GM12878 (cell line): ENCODE measurements at regions of chr3 and their contacts with region 1.

Region 1: DNA sequence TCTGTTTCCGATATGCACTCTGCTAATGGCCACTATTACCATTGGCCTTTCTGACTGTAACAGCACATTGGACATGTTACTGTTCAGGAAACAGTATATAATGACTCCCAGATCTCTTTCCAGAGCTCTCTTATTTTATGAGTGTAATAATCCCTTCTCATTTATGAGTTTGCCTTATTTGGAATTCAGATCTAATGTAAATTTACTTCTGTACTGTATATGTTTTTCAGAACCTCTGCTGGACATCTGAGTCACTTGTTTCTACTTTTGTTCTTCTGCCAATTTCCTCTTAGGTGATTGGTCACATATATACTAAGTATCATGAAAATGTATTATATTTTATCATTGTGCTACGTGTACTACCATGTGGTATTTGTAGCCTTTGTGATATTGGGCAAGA is 30.5 kb downstream of the RSRC1 start:
- DNase-seq: no peak
- ATAC-seq: no peak
- H3K4me3 ChIP-seq: no peak overlapping the region
- H3K27ac ChIP-seq: no peak overlapping the region
- H3K4me1 ChIP-seq: no peaks in the 10 kb centered on the region
- H3K27me3 ChIP-seq: no peaks in the 10 kb centered on the region
- CTCF ChIP-seq: no peak
- EP300 ChIP-seq: no peak
- POLR2A ChIP-seq: no peak
- RAD21 ChIP-seq: no peak

Region 2: GRCh38 chr3:158110658-158111018 is 29.8 kb before region 1 on chr3:
- CTCF ChIA-PET with region 1: no interaction called
- POLR2A ChIA-PET with region 1: no interaction called
- RAD21 ChIA-PET with region 1: no interaction called
- SMC1A ChIA-PET with region 1: no interaction called
- in situ Hi-C with region 1: no loop called
- intact Hi-C with region 1: no loop called
- DNase-seq: no peak
- ATAC-seq: no peak
- H3K4me3 ChIP-seq: peak overlapping the region; percentile 79
- H3K27ac ChIP-seq: peak overlapping the region; percentile 80
- H3K4me1 ChIP-seq: 0 out of 2 replicates have a peak, but pooled peaks cover 4% of the 10 kb centered on the region
- H3K27me3 ChIP-seq: peaks cover 6 to 8% of the 10 kb centered on the region in 2 experiments; a peak in 2 of 4 replicates
- CTCF ChIP-seq: no peak
- EP300 ChIP-seq: no peak
- POLR2A ChIP-seq: no peak
- RAD21 ChIP-seq: no peak

Region 3: DNA sequence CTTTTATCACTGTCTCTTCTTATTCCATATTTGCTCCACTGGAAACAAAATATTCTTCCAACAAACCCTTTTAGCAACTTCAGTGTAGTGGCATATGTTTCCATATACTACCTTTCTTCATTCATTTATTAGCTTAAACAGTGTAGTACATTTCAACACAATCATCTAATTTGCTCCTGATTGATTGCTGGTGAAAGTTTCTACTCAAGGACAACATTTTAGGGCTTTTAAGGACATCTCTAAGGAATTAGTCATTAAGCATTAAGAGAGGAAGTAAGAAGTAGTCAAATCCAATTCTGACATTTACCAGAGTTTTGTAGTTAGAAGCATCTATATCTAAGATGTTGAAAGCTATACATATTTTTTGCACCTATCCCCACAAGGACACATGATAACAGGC is 25.3 kb after region 1 on chr3:
- CTCF ChIA-PET with region 1: no interaction called
- POLR2A ChIA-PET with region 1: no interaction called
- RAD21 ChIA-PET with region 1: no interaction called
- SMC1A ChIA-PET with region 1: no interaction called
- in situ Hi-C with region 1: no loop called
- intact Hi-C with region 1: no loop called
- DNase-seq: no peak
- ATAC-seq: no peak
- H3K4me3 ChIP-seq: no peak overlapping the region
- H3K27ac ChIP-seq: no peak overlapping the region
- H3K4me1 ChIP-seq: no peaks in the 10 kb centered on the region
- H3K27me3 ChIP-seq: no peaks in the 10 kb centered on the region
- CTCF ChIP-seq: no peak
- EP300 ChIP-seq: no peak
- POLR2A ChIP-seq: no peak
- RAD21 ChIP-seq: no peak

Region 4: GRCh38 chr3:158205994-158206393 is 65.6 kb after region 1 on chr3:
- CTCF ChIA-PET with region 1: no interaction called
- POLR2A ChIA-PET with region 1: no interaction called
- RAD21 ChIA-PET with region 1: no interaction called
- SMC1A ChIA-PET with region 1: no interaction called
- in situ Hi-C with region 1: no loop called
- intact Hi-C with region 1: loop called (anchors 5 kb)
- DNase-seq: peak; percentile 17
- ATAC-seq: peak; percentile 74
- H3K4me3 ChIP-seq: no peak overlapping the region
- H3K27ac ChIP-seq: no peak overlapping the region
- H3K4me1 ChIP-seq: no peaks in the 10 kb centered on the region
- H3K27me3 ChIP-seq: no peaks in the 10 kb centered on the region
- CTCF ChIP-seq: no peak
- EP300 ChIP-seq: no peak
- POLR2A ChIP-seq: no peak
- RAD21 ChIP-seq: no peak